Right ventricle myocardium superior (tissue), 1 donor: ENCODE measurements at regions of chr9 and their contacts with region 1.

Region 1: GRCh38 chr9:16236311-16236710 is 634.2 kb downstream of the BNC2 start:
- DNase-seq: no peak
- ATAC-seq: peak; percentile 74

Region 2: DNA sequence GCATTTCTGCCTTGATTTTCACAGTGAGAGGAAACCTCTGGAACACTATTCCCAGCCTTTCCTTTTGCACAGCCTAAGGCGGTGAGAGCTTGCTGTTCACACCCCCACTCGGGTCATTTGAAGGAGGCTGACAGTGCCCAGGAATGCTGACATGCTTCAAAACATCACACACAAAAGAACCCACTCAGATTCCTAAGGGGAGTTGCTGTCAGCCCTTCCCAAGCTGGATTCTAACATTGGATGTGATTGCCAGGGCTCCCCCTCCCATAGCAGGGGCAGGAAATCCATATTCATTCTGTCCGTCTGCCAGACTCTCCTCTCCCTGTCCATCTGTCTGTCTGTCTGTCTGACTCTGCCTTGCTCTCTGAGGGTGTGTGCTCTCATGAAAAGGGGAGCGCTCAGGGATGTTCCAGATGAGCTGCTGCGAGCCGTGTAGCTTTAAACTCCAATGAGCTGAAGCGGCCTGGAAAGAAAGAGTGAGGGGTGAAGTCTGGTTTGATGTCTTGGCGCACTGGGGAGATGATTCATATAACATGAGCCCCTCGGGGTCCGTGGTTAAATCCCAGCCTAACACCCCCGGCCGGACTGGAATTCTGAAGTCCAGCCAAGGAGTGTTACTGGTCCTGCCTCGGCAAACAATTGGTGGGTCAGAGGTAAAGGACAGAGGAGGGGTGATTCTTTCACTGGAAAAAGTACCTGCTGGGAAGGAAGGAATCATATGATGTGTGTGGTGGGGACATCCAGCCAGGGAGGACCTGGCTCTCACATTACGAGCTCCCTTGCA is 166.4 kb before region 1 on chr9:
- intact Hi-C with region 1: no loop called
- DNase-seq: no peak
- ATAC-seq: no peak

Region 3: DNA sequence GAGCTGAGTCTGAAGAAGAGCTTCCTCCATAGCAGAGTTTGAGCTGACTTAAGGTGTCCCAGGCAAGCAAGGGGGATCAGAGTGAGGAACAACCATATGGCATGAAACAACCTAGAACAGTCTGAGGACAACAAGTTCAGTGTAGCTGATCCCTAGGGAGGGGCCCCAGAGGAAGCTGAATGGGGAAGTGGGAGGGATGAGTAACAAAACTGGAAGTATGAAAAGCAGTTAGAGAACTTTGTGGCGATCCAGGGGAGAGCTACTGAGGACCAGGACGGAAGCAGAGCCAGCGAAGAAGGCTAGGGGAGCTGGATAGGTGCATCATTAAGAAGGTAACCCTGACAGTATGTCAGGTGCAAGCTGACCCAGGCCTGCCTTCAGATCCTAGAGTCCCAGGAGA is 53.3 kb after region 1 on chr9:
- intact Hi-C with region 1: loop called (anchors 5 kb)
- DNase-seq: no peak
- ATAC-seq: peak; percentile 58